ENCODE measurements at regions of chr12 and their contacts with region 1.

Region 1: GRCh38 chr12:12813120-12814101 is at the start of gene DDX47:
- DNase-seq: peak; percentile 94
- H3K4me3 Mint-ChIP-seq: peak within 1 kb of the TSS; percentile 85
- H3K27ac Mint-ChIP-seq: peak within 1 kb of the TSS; percentile 81
- H3K4me1 Mint-ChIP-seq: peaks cover 52% of the 10 kb centered on the region
- H3K27me3 Mint-ChIP-seq: no peaks in the 10 kb centered on the region
- total RNA-seq, gene DDX47: 120 and 127 TPM in 2 replicates

Region 2: GRCh38 chr12:12803186-12803585 is 10.2 kb before region 1 on chr12:
- intact Hi-C with region 1: loop called (anchors 1 kb)
- DNase-seq: peak; percentile 48
- H3K4me3 Mint-ChIP-seq: peak overlapping the region; percentile 49
- H3K27ac Mint-ChIP-seq: peak overlapping the region; percentile 84
- H3K4me1 Mint-ChIP-seq: peaks cover 58% of the 10 kb centered on the region
- H3K27me3 Mint-ChIP-seq: no peaks in the 10 kb centered on the region

Region 3: DNA sequence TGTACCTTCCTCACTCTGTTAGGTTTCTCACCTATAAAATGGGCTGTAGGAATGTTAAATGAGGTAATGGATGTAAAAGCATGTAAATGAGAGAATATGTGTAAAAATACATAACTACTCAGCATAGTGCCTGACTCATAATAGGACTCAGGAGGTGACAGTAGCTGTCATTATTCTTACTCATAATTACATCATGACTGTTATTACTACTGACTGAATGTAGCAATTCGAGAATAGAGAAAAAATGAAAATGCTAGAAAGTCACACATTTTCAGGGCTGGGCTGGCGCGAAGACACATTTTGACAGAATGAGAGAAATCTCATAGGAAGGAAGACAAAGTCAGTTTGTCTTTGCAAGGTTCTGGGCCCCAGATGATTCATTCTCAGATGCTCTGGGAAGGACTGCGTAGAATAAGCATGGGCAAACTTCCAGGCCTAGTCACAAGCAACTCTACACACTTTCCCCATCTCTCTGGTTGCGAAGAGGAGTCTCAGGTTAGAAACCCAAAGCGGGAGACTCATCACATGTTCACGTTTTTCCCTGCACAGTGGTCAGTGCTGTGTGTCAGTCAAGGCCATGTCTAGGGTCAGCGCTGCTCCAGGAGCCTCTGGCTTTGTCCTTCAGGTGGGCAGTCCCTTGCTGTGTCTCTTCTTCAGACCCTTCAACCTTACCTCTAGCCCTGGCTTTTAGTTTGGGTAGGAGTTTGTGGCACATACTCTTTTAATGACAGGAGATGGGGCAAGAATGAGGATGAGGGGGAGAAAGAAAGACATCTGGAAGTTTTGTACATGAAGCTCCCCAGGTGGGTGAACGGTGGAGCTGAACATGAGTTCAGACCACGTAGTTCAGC is 86.3 kb after region 1 on chr12:
- intact Hi-C with region 1: no loop called
- DNase-seq: peak; percentile 26
- H3K4me3 Mint-ChIP-seq: no peak overlapping the region
- H3K27ac Mint-ChIP-seq: peak overlapping the region; percentile 37
- H3K4me1 Mint-ChIP-seq: peaks cover 13% of the 10 kb centered on the region
- H3K27me3 Mint-ChIP-seq: peaks cover 12% of the 10 kb centered on the region

Region 4: DNA sequence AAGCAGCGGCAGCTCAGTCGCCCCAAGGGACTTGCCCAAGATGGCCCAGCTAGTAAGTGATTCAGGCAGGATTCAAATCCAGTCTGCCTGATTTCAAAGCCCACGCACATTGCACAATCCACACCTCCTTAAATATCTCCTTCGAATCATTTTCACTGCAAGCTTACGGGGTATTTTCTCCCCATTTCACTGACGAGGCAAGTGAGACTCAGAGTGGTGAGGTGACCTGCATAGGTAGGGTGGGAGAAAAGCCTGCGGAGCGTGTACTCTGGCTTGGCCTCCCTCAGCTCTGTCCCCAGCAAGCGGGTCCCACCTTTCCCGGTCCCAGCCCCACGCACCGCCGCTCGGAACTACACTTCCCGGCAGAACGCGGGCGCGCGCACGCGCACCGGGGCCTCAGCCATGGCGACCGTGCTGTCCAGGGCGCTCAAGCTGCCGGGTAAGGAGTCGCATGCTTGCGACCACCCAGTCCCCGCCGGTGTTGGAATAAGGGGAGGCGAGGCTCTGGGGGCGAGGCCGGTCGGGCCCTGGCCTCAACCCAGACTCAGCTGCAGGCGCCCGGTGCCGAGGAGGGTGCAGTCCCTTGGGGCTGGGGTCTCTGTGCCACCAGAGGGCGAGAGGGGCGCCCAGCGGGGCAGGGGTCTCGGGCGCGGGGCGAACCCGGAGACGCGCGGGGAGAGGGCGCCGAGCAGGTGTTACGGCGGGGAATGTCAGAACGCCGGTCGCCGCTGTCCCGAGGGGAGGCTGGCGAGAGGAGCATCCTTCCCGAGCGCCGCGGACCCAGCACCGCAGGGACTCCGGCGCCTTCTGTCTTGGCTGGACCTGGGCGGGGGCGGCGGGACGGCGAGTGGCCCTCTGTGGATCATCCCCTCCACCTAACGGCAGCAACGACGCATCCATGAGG is 230.8 kb after region 1 on chr12 and contains the start of gene FAM234B:
- intact Hi-C with region 1: no loop called
- DNase-seq: peak; percentile 62
- H3K4me3 Mint-ChIP-seq: peak within 1 kb of the TSS; percentile 83
- H3K27ac Mint-ChIP-seq: peak within 1 kb of the TSS; percentile 66
- H3K4me1 Mint-ChIP-seq: peaks cover 4% of the 10 kb centered on the region
- H3K27me3 Mint-ChIP-seq: peaks cover 19% of the 10 kb centered on the region
- total RNA-seq, gene FAM234B: 6.0 and 6.6 TPM in 2 replicates